ENCODE measurements at regions of chr12 and their contacts with region 1.

Region 1: DNA sequence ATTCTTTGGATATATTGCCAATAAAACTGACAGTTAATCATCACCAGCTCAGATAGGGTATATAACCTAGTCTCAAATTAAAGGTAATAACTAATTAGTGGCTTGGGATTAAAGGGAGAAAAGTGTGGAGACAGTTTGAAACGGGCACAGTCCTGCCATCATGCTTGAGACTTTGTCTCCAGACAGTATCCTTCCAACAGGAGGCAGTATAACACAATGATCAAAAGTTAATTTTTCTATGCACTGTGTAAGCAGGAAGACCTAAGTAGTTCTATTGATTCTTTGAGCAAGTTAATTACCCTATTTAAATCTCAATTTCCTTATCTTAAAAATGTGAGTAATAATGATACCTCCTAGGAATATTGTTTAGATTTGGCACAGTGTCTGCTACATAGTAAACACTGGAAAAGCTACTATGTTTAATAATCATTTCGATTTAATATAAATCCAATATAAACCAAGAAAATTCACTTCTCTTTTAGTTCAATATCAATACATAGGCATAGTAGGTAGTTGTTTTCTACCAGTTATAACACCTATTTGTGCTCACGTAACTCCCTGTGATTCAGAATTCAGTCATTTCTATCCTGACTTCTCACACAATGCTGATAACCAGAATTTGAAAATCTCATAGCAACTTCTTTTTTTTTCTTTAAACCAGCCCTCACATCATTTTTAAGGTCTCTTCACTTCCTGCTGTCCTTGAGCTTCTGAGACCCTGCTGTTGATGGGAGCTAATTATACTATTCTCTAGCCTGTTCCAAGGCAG is 53.7 kb downstream of the GALNT4 start:
- DNase-seq: no peak
- H3K4me3 ChIP-seq: no peak overlapping the region
- H3K27ac ChIP-seq: no peak overlapping the region
- H3K27me3 ChIP-seq: no peaks in the 10 kb centered on the region
- CTCF ChIP-seq: peak; percentile 71

Region 2: DNA sequence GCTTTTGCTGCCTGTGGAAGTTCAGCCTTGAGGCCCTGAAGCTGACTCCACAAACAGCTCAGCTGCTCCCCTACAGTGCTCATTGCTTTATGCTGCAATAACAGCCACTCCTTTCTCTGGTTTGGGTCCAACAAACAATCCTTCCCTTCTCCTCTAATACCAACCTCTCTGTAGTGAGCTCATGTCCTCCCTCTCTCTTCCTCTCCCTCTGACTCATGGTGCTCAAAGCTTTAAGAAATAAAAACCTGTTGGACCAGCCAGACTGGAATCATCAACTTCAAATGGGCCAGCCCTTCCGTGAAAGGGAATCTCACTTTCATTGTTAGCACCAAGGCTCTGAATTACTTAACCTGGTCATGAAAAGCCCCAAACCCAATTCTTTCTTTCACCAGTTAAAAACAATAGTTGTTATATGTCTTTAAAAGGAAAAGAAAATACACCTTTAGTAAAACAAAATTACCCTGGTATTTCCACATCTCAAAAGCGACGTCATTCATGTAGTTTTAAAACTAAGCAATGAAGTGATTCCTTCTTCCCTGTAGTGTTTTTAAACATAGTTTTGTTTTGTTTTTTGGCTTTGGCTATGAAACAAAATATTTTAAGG is 245.0 kb before region 1 on chr12:
- CTCF ChIA-PET with region 1: no interaction called
- POLR2A ChIA-PET with region 1: no interaction called
- DNase-seq: peak; percentile 66
- H3K4me3 ChIP-seq: no peak overlapping the region; the same call in 1 of the 2 replicates
- H3K27ac ChIP-seq: peak overlapping the region; percentile 66
- H3K27me3 ChIP-seq: no peaks in the 10 kb centered on the region
- CTCF ChIP-seq: no peak

Region 3: DNA sequence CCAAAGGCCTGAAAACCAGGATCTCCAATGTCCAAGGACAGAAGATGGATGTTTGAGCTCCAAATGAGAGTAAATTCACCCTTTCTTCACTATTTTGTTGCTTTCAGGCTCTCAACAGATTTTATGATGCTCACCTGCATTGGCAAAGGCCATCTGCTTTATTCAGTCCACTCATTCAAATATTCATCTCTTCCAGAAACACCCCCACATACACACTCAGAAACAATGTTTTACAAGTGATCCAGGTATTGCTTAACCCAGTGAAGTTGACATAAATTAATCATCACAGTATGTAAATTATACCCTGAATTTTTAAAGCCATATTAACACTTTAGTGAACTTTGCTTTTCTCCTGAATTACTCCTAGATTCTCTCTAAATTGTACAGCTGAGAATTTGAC is 182.0 kb before region 1 on chr12:
- CTCF ChIA-PET with region 1: no interaction called
- POLR2A ChIA-PET with region 1: no interaction called
- DNase-seq: no peak
- H3K4me3 ChIP-seq: no peak overlapping the region
- H3K27ac ChIP-seq: no peak overlapping the region
- H3K27me3 ChIP-seq: no peaks in the 10 kb centered on the region
- CTCF ChIP-seq: no peak

Region 4: GRCh38 chr12:89524541-89525285 is 53.8 kb after region 1 on chr12 and contains the start of gene GALNT4:
- CTCF ChIA-PET with region 1: interaction called, 117 read pairs
- POLR2A ChIA-PET with region 1: no interaction called
- DNase-seq: peak; percentile 52
- H3K4me3 ChIP-seq: peak within 1 kb of the TSS; percentile 91
- H3K27ac ChIP-seq: peak within 1 kb of the TSS; percentile 76
- H3K27me3 ChIP-seq: no peaks in the 10 kb centered on the region
- CTCF ChIP-seq: peak; percentile 77
- polyA plus RNA-seq, gene GALNT4: 5.3 and 7.3 TPM in 2 replicates

Region 5: GRCh38 chr12:89529738-89530137 is 58.8 kb after region 1 on chr12:
- CTCF ChIA-PET with region 1: interaction called, 117 read pairs
- POLR2A ChIA-PET with region 1: no interaction called
- DNase-seq: no peak
- H3K4me3 ChIP-seq: no peak overlapping the region
- H3K27ac ChIP-seq: no peak overlapping the region
- H3K27me3 ChIP-seq: no peaks in the 10 kb centered on the region
- CTCF ChIP-seq: peak; percentile 76

Region 6: GRCh38 chr12:89815225-89815624 is 344.3 kb after region 1 on chr12:
- CTCF ChIA-PET with region 1: no interaction called
- POLR2A ChIA-PET with region 1: no interaction called
- DNase-seq: no peak
- H3K4me3 ChIP-seq: no peak overlapping the region
- H3K27ac ChIP-seq: no peak overlapping the region
- H3K27me3 ChIP-seq: no peaks in the 10 kb centered on the region
- CTCF ChIP-seq: no peak